Mammary epithelial cell (primary cell): ENCODE measurements at regions of chr22 and their contacts with region 1.

Region 1: DNA sequence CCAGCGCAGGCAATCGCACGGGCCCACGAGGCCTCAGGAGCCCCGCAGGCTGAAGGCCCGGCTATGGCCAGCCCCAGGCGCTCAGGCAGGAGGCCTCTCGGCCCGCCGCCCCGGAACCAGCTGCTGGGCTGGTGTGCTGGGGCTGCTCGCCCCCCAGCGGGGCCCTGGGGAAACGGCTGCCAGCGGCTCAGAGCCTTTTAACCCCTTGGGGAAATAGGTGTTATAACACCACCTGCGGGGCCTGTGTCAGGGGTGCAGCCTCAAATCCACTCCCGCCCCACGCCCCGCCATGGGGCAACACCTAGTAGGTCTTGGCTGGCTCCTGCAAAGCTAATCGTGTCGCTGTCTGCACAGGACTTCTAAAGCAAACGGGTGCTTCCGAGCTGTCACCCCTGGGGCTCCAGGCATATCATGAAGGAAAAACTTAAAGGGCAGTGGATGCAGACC is 237.4 kb downstream of the TTC28 start:
- DNase-seq: peak; percentile 75
- H3K4me3 ChIP-seq: peak overlapping the region; percentile 40 to 51 (median 47)
- H3K27ac ChIP-seq: no peak overlapping the region
- H3K4me1 ChIP-seq: peaks cover 9% of the 10 kb centered on the region
- H3K27me3 ChIP-seq: peaks cover 3% of the 10 kb centered on the region
- CTCF ChIP-seq: peak; percentile 30 to 82

Region 2: GRCh38 chr22:28019881-28020871 is 422.1 kb before region 1 on chr22:
- CTCF ChIA-PET with region 1: no interaction called
- dilution Hi-C with region 1: no loop called
- in situ Hi-C with region 1: no loop called
- intact Hi-C with region 1: loop called (anchors 1 kb)
- DNase-seq: peak; percentile 23
- H3K4me3 ChIP-seq: no peak overlapping the region
- H3K27ac ChIP-seq: no peak overlapping the region
- H3K4me1 ChIP-seq: peaks cover 4% of the 10 kb centered on the region
- H3K27me3 ChIP-seq: no peaks in the 10 kb centered on the region
- CTCF ChIP-seq: peak; percentile 85 to 95

Region 3: DNA sequence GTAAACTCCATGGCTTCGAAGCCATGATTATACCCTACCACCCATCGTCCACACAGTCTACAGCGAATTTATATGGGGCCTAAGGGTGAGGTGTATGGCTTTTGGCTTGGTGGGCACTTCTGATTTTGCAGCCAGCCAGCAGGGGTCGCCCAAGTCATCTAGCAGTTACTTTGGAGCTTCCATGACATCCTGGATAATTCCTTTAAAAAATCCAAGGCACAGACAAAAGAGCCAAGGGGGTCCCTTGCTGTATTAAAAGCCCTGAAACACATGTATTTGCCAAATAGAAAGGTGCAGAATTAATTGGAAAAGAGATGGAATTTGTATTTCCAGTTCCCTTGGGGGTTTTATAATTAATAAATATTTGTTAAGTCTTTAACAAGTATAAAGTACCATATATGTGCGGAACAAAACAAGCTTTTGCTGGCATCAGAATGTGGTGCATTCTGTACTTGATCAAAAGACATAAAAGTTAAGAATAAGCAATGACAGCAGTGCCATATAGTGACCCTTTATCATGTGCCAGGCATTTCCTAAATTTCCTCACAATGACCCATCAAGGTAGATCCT is 390.4 kb before region 1 on chr22:
- CTCF ChIA-PET with region 1: interaction called, 6 read pairs
- dilution Hi-C with region 1: no loop called
- in situ Hi-C with region 1: loop called (anchors 10 to 25 kb)
- intact Hi-C with region 1: loop called (anchors 1 kb)
- DNase-seq: peak; percentile 25
- H3K4me3 ChIP-seq: no peak overlapping the region
- H3K27ac ChIP-seq: no peak overlapping the region
- H3K4me1 ChIP-seq: no peaks in the 10 kb centered on the region
- H3K27me3 ChIP-seq: peaks cover 2% of the 10 kb centered on the region
- CTCF ChIP-seq: peak; percentile 82 to 91

Region 4: DNA sequence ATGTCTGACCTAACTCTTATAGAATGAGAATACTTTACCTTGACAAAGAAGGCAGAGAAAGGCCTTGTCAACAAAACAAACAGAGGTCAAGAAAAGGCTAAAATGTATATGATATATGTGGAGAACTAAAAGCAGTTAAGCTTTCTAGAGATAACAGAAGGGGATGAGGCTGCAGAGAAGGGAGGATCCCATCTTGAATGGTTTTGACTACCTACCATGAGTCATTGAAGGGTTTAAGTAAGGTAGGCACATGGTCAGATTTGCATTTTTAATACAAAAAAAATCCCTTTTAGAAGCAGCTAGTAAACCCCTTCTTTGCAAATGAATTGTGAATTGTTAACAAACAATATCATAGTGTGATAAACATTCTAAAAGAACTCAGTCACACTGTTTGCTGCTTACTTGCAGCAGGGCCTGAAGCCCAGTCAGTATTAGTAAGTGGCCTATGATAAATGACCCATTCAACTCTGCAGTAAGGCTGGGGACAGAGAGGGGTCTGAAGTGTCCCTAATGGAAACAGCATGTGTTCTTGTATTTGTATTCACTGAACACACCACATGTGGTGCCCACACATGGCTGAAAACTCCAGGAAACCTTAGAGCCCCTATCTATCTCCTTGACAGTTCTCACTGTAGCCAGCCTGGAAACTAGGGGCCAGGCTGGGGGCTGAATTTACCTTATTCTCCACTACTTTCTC is 194.5 kb before region 1 on chr22:
- CTCF ChIA-PET with region 1: no interaction called
- dilution Hi-C with region 1: no loop called
- in situ Hi-C with region 1: no loop called
- intact Hi-C with region 1: loop called (anchors 1 kb)
- DNase-seq: no peak
- H3K4me3 ChIP-seq: no peak overlapping the region
- H3K27ac ChIP-seq: no peak overlapping the region
- H3K4me1 ChIP-seq: no peaks in the 10 kb centered on the region
- H3K27me3 ChIP-seq: no peaks in the 10 kb centered on the region
- CTCF ChIP-seq: no peak

Region 5: DNA sequence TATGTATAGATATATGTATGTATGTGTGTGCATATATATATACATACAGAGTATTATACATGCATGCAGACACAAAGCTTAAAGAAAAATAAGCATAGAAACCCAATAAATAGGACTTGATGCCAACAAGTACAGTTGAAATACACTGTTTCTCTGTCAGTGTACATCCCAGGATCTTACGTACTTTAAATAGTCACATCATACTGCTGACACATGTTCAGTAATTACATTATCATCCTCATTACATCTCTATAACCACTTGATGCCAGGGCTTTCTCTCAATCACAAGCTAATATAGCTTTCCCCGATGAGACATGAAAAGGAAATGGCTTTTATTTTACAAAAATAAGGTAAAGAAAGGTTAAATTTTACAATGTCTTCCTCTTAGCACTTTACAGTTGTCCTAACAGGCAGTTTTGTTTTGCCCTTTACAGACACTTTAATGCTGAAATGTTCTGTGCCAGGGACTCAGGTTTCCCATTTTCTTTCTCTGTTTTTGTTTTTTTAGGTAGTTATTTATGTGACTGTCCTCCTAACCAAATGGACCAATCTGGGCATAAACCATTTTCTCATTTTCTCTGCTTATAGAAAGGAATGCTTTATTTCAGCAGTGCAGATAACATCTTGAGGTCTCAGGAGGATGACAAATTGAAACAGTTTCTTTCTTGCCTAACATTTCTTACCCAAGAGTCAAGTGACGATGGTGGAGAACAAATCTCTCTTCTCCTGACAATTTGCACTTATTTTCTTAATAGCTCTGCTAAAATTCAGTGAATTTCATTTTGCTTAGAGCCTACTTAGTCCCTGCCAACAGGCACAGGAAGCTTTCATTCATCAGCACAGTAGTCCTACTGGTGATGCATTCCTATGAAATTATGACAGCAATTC is 112.9 kb before region 1 on chr22:
- CTCF ChIA-PET with region 1: no interaction called
- dilution Hi-C with region 1: no loop called
- in situ Hi-C with region 1: no loop called
- intact Hi-C with region 1: no loop called
- DNase-seq: peak; percentile 73
- H3K4me3 ChIP-seq: no peak overlapping the region
- H3K27ac ChIP-seq: no peak overlapping the region
- H3K4me1 ChIP-seq: peaks cover 9% of the 10 kb centered on the region
- H3K27me3 ChIP-seq: no peaks in the 10 kb centered on the region
- CTCF ChIP-seq: no peak

Region 6: DNA sequence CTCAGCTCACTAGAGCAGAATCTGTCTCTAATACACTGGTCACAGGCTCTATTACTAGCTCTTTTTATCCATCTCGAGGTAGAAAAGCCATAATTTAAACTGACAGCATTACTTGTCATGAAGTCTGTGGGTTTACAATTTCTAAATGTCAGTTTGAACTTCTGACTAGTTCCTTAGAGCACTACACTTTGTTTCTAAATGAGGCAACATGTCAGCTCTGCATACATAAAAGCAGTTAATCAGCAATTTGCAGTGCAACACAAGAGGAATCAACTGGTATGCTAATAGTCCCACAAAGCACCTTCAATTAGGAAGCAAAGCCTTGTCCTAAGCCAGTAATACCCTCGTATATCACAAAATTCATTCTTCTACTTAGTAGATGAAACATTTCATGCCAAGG is 84.0 kb before region 1 on chr22:
- CTCF ChIA-PET with region 1: no interaction called
- dilution Hi-C with region 1: no loop called
- in situ Hi-C with region 1: no loop called
- intact Hi-C with region 1: no loop called
- DNase-seq: no peak
- H3K4me3 ChIP-seq: no peak overlapping the region
- H3K27ac ChIP-seq: no peak overlapping the region
- H3K4me1 ChIP-seq: no peaks in the 10 kb centered on the region
- H3K27me3 ChIP-seq: no peaks in the 10 kb centered on the region
- CTCF ChIP-seq: no peak